CD14-positive monocyte (primary cell): ENCODE measurements at regions of chr18 and their contacts with region 1.

Region 1: DNA sequence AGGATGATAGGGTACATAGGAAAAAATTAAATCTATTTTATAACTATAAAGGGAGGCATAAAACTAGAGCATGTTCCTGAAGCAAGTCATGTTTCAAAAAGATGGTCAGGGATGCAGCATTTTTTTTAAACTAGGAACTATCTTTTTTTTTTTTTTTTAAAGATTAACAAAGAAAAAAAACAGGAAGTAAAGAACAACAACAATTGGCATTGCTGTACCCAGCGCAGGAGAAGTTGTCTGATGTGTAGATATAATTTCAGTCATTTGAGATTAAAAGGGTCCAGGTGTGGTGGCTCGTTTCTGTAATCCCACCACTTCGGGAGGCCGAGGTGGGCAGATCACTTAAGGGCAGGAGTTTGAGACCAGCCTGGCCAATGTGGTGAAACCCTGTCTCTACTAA is 41.5 kb downstream of the PMAIP1 start:
- DNase-seq: peak in 2 of 3 donors; percentile 47 to 48
- H3K4me3 ChIP-seq: no peak overlapping the region
- H3K4me3 Mint-ChIP-seq: no peak overlapping the region
- H3K27ac ChIP-seq: no peak overlapping the region
- H3K27ac Mint-ChIP-seq: peak overlapping the region in 5 of 7 donors; percentile 63 to 81 (median 70)
- H3K4me1 ChIP-seq: peaks cover 21 to 25% of the 10 kb centered on the region in 2 donors
- H3K4me1 Mint-ChIP-seq: peaks cover 22% of the 10 kb centered on the region
- H3K27me3 ChIP-seq: no peaks in the 10 kb centered on the region
- H3K27me3 Mint-ChIP-seq: peaks cover 0 to 7% (median 2%) of the 10 kb centered on the region in 3 donors
- CTCF ChIP-seq: no peak

Region 2: DNA sequence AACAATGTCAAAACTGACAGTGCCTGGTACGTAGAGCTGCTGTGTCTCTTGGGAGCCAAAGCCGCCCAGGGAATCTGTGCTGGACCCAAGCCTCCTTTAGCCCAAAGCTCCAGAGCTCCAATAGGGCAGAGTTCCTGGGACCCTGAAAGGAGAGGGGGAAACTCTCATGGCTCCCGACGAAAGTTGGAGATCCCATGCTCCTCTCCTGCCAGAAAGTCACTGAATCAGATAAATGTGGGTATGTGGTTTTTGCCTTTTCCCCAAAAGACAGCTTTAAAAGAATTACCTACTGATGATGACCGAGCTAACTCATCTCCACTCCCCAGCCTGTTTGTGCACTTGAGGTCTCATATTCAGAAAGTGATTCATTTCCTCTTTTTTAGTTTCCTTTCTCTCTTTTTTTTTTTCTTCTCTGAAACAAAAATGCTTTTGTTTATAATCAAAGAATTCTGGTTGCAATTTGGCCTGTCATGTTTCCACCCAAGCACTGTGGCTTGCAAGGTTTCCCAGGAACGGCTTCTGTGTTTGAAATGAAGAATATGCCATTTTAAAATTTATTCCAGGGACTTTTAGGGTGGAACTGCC is 55.7 kb before region 1 on chr18:
- intact Hi-C with region 1: loop called (anchors 10 kb)
- DNase-seq: peak; percentile 59 to 84 (median 79)
- H3K4me3 ChIP-seq: peak overlapping the region in 2 of 3 experiments; percentile 2 to 63
- H3K4me3 Mint-ChIP-seq: peak overlapping the region in 1 of 2 donors; percentile 57
- H3K27ac ChIP-seq: peak overlapping the region; percentile 75 to 84
- H3K27ac Mint-ChIP-seq: peak overlapping the region; percentile 79 to 93 (median 87)
- H3K4me1 ChIP-seq: peaks cover 57 to 61% of the 10 kb centered on the region in 2 donors
- H3K4me1 Mint-ChIP-seq: peaks cover 46% of the 10 kb centered on the region
- H3K27me3 ChIP-seq: no peaks in the 10 kb centered on the region
- H3K27me3 Mint-ChIP-seq: no peaks in the 10 kb centered on the region
- CTCF ChIP-seq: no peak